ENCODE measurements at regions of chr3 and their contacts with region 1.

Region 1: DNA sequence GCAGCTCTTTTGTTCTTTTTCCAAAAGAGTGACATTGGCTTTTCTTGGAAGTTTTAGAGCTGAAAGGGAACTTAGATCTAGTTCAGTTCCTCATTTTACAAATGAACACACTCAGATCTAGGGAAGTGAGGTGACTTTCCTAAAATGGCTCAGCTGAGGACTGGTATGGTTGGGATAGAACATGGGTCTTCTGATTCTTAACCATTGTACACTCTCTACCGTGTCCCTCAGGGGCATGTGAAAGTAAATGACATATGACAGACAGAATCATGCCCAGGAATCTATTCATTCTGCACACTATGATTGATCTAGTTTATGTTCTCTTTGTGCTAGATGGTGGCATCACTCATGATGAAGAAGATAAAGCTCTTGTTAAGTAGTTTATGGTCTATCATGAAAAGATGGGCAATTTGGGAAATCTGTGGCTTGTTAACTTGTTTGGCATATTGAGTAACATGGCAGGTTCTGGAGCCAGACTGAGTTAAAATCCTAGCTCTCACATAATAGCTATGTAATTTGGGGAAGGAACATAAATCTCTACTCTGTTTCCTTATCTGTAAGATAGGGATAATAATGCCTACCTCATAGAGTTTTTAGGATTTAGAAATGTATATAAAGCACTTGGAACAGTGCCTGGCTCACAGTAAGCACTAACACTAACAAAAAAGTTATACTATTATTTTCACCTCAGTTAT is 30.9 kb downstream of the UBE2E1 start:
- DNase-seq: no peak
- ATAC-seq: no peak
- H3K4me3 ChIP-seq: no peak overlapping the region
- H3K27ac ChIP-seq: no peak overlapping the region
- H3K4me1 ChIP-seq: peaks cover 2% of the 10 kb centered on the region; the same call in 1 of the 2 replicates
- H3K27me3 ChIP-seq: no peaks in the 10 kb centered on the region
- CTCF ChIP-seq: no peak
- POLR2A ChIP-seq: no peak
- RAD21 ChIP-seq: no peak

Region 2: DNA sequence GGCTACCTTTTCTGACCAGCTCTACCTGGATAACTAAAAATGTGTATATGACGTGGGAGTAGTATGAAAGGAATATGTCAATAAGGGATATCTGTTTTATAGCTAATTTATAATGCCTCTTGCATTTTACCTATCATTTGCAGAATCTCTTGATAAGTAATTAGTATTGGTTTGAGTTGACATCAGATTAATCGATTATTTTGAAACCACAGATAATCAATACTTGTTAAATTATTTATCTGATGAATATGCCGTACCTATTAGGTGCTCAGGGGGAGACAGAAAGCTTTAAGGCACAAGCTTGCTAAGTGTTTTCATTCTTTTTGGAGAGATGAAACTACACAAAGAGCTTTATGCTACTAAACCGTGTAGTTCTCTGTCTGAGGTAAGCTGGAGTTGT is 132.7 kb after region 1 on chr3:
- CTCF ChIA-PET with region 1: interaction called, 11 read pairs
- POLR2A ChIA-PET with region 1: no interaction called
- dilution Hi-C with region 1: no loop called
- in situ Hi-C with region 1: no loop called
- intact Hi-C with region 1: no loop called
- DNase-seq: no peak
- ATAC-seq: no peak
- H3K4me3 ChIP-seq: no peak overlapping the region
- H3K27ac ChIP-seq: no peak overlapping the region
- H3K4me1 ChIP-seq: peaks cover 6% of the 10 kb centered on the region
- H3K27me3 ChIP-seq: no peaks in the 10 kb centered on the region
- CTCF ChIP-seq: no peak
- POLR2A ChIP-seq: no peak
- RAD21 ChIP-seq: no peak

Measured in IMR-90 (cell line).